SK-N-SH (cell line): ENCODE measurements at regions of chr3 and their contacts with region 1.

Region 1: DNA sequence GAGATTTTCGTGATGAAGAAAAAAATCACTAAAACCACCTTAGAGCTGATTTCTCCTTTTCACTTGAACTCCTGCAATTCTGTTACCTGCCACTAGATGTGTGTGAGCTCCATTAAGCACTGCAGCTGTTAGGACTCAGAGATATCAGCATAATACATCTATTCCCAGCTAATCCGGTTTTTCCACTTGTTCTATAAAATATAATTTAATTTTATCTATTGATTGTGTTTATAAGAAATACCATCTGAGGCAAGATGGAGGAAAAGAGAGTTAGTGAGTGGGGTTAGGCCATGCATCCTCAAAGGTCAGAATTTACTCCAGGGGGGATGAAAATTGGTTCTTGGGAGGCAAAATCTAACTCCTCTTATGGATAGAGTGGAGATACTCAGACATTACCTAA is 152.7 kb downstream of the IL20RB start:
- DNase-seq: peak; percentile 56
- H3K4me3 ChIP-seq: no peak overlapping the region; a peak in 1 of 4 replicates
- H3K27ac ChIP-seq: no peak overlapping the region
- H3K4me1 ChIP-seq: no peaks in the 10 kb centered on the region
- H3K27me3 ChIP-seq: no peaks in the 10 kb centered on the region
- CTCF ChIP-seq: peak; percentile 66
- EP300 ChIP-seq: no peak
- RAD21 ChIP-seq: peak; percentile 79

Region 2: GRCh38 chr3:137121704-137122314 is 11.3 kb after region 1 on chr3:
- CTCF ChIA-PET with region 1: interaction called, 40 read pairs
- POLR2A ChIA-PET with region 1: no interaction called
- DNase-seq: peak; percentile 33
- H3K4me3 ChIP-seq: no peak overlapping the region
- H3K27ac ChIP-seq: no peak overlapping the region
- H3K4me1 ChIP-seq: no peaks in the 10 kb centered on the region
- H3K27me3 ChIP-seq: no peaks in the 10 kb centered on the region
- CTCF ChIP-seq: peak; percentile 57
- EP300 ChIP-seq: no peak
- RAD21 ChIP-seq: peak; percentile 71

Region 3: DNA sequence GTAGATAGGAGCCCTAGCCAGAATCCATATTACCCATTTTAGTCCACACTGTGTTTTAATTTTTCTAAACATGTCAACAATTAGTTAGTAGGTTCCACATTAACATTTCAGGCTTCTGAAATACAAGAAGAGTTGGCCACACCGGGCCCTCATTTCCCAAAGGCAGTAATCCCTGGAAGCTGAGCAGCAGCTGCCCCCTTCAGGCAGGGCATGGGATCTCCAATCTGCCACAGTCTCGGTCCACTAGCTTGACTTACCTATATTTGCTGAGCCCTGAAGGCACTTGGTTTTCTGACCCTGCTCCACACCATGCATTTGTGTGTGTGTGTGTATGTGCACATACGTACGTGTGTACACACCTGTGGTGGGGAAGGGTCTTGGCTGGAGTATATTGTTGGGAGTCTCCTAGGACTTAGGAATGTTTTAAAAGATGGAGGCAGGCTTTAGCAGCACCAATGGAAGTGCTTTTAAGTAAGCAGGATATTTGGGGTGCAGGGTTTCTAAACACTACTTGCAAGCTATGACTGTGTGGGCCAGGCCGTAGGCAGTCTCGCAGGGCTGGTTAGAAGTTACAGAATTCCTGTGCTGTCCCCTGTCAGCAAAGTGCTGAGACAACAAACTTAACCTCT is 582.4 kb after region 1 on chr3:
- CTCF ChIA-PET with region 1: interaction called, 21 read pairs
- POLR2A ChIA-PET with region 1: no interaction called
- DNase-seq: peak; percentile 38
- H3K4me3 ChIP-seq: 0 out of 4 replicates have a peak overlapping the region, but pooled peaks of 1 of the 2 experiments have one; percentile 29
- H3K27ac ChIP-seq: no peak overlapping the region
- H3K4me1 ChIP-seq: no peaks in the 10 kb centered on the region
- H3K27me3 ChIP-seq: no peaks in the 10 kb centered on the region
- CTCF ChIP-seq: no peak
- EP300 ChIP-seq: no peak
- RAD21 ChIP-seq: peak; percentile 80

Region 4: DNA sequence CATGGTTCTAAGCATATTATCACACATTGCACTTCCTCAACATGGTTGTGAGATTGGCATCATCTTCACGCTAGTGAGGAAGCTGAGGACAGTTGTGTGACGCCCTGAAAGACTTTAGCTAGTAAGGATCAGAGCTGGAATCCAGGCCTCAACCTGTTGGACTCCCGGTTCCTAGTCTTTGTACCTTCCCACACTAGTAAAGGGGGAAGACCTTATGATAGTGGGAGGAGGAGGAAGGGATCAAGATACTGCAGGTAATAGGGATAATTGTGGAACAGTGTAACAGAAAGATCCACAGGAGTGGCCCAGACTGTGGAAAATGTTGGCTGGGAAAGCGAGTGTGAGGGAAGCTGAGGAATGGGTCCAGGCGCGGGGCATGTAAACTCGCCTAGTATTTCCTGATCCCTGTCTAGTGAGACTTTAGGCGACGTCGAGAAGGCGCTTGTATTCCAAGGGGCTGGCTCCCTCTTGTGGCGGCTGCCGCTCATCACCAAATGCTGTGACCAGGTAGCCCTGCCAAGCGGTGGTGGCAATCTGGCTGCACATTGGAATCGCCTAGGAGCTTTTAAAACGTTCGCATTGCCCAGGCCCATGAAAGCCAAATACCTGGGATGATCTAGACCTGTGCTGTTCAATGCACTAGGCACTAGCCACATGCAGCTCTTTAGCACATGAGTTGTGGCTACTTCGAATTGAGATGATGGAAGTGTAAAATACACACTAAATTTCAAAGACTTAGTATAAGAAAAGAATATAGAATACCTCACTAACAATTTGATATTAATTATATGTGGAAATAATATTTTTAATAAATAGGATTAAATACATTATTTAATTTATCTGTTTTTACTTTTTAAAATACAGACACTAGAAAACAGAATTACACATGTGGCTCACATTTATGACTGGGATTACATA is 860.7 kb after region 1 on chr3:
- CTCF ChIA-PET with region 1: interaction called, 75 read pairs
- POLR2A ChIA-PET with region 1: no interaction called
- DNase-seq: peak; percentile 72
- H3K4me3 ChIP-seq: peak overlapping the region in 1 of 2 experiments; percentile 40; a peak in 3 of 4 replicates
- H3K27ac ChIP-seq: no peak overlapping the region
- H3K4me1 ChIP-seq: peaks cover 0 to 3% of the 10 kb centered on the region in 2 experiments; a peak in 1 of 4 replicates
- H3K27me3 ChIP-seq: no peaks in the 10 kb centered on the region
- CTCF ChIP-seq: peak; percentile 85
- EP300 ChIP-seq: no peak
- RAD21 ChIP-seq: peak; percentile 91